Activated CD4-positive, alpha-beta T cell treated with anti-CD3 and anti-CD28 coated beads for 36 hours (primary cell): ENCODE measurements at regions of chr15 and their contacts with region 1.

Region 1: GRCh38 chr15:56732921-56733797 is at the start of gene ZNF280D:
- DNase-seq: peak; percentile 88
- ATAC-seq: peak; percentile 85
- H3K4me3 Mint-ChIP-seq: peak within 1 kb of the TSS; percentile 91
- H3K27ac Mint-ChIP-seq: peak within 1 kb of the TSS; percentile 98
- H3K4me1 Mint-ChIP-seq: peaks cover 32% of the 10 kb centered on the region
- H3K27me3 Mint-ChIP-seq: peaks cover 2% of the 10 kb centered on the region
- total RNA-seq, gene ZNF280D: 18.9 to 19.7 TPM

Region 2: DNA sequence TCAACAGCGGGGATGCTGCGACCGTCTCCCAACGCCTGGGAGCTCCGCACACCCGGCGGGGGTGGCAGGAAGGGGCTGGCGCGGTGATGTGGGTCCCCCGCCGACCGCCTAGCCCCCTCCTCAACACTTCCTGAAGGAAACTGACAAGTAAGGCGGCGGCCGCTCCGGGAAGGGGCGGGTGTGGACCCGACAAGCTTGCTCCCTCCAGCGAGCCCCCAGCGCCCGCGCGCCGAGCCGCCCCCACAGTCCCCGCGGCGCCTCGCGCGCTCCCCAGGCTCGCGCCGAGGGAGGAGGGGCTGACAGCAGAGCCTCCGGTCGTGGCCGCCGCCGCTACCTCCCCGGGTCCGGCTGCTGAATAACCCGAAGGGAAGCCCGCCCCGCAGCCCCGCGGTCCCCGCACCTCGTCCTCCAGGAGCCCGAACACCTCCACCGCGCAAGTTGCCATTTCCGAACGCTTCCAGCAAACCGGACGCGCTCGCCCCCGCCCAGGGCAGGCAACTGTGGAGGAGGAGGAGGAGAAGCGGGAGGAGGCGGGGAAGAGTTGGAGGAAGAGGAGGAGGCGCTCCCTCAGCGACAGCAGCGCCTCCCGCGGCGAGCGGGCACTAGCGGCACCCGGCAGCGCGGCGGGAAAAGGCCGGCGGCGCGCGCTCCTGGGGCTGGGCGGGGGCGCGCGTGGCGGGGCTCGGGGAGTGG is 739.9 kb before region 1 on chr15 and contains the start of gene NEDD4:
- CTCF ChIA-PET with region 1: no interaction called
- POLR2A ChIA-PET with region 1: no interaction called
- intact Hi-C with region 1: loop called in 1 of 2 experiments (anchors 10 kb)
- DNase-seq: peak; percentile 86
- ATAC-seq: peak; percentile 91
- H3K4me3 Mint-ChIP-seq: peak within 1 kb of the TSS; percentile 84
- H3K27ac Mint-ChIP-seq: peak within 1 kb of the TSS; percentile 79
- H3K4me1 Mint-ChIP-seq: peaks cover 22% of the 10 kb centered on the region
- H3K27me3 Mint-ChIP-seq: no peaks in the 10 kb centered on the region
- total RNA-seq, gene NEDD4: 22.4 to 23.3 TPM

Region 3: GRCh38 chr15:56464893-56465520 is 268.2 kb before region 1 on chr15 and contains the start of gene MNS1:
- CTCF ChIA-PET with region 1: interaction called, 4 read pairs
- POLR2A ChIA-PET with region 1: no interaction called
- intact Hi-C with region 1: loop called in 1 of 2 experiments (anchors 1 kb)
- DNase-seq: peak; percentile 90
- ATAC-seq: peak; percentile 97
- H3K4me3 Mint-ChIP-seq: peak within 1 kb of the TSS; percentile 84
- H3K27ac Mint-ChIP-seq: peak within 1 kb of the TSS; percentile 42
- H3K4me1 Mint-ChIP-seq: peaks cover 29% of the 10 kb centered on the region
- H3K27me3 Mint-ChIP-seq: peaks cover 19% of the 10 kb centered on the region
- total RNA-seq, gene MNS1: 0.41 to 0.74 TPM

Region 4: DNA sequence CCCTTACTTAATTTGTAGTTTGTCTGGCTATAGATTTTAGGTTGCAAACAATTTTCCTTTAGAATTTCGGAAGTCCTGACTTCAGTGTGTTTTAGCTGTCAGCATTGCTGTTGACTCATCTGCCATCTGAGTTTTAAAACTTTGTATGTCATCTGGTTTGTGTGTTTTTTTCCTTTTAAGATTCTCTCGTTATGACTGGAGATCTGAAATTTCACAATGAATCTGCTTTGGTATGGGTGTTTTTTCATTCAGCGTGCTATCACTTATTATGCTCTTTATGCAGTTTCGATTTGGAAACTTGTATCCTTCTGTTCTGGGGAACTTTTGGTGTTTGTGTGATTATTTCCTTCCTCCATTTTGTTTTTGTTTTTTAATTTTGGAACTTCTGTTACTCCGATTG is 53.8 kb after region 1 on chr15:
- CTCF ChIA-PET with region 1: no interaction called
- POLR2A ChIA-PET with region 1: no interaction called
- intact Hi-C with region 1: loop called in 1 of 2 experiments (anchors 5 kb)
- DNase-seq: no peak
- ATAC-seq: peak; percentile 96
- H3K4me3 Mint-ChIP-seq: no peak overlapping the region
- H3K27ac Mint-ChIP-seq: peak overlapping the region; percentile 29
- H3K4me1 Mint-ChIP-seq: peaks cover 14% of the 10 kb centered on the region
- H3K27me3 Mint-ChIP-seq: peaks cover 3% of the 10 kb centered on the region

Region 5: DNA sequence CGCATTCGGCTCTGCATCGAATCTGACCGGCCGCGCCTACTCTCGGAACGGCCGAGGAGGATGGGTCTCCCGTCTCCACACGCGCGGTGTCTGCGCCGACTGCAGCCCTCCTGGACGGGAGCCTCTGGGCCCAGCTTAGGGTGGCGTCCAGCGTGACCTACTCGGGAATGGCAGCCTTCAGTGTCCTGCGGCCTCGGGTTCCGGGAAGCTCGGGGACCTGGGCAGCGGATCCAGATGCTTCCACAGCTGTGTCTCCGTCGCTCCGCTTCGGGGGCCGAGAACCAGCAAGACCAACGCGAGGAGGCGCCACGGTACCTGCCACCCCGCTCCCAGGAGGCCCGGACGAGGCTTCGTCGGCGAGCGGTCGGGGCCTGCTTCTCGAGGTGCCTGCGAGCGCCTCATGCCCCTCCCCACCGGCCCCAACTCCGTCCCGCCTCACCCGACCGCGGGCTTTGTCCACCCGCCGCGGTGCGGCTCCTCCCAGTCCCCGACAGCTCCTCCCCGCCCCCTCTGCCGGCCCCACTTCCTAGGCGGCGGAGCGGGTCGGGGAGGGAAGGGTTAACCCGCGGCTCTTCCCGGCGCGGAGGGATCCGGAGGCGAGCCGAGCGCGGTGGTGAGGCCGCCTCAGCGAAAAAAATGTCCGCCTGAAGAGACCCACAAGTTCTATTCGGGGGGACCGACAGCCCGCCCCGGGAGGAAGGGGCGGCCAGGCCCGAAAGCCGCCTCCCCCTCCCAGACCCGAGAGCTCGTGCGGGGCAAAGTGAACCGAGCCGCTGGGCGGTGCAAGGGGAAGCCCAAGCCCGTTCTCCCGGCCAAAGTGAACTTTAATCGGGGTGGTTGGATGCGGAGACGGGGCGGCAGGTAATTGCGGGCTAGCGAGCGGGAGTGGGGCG is 185.1 kb after region 1 on chr15 and contains the start of gene TCF12:
- CTCF ChIA-PET with region 1: no interaction called
- POLR2A ChIA-PET with region 1: no interaction called
- intact Hi-C with region 1: loop called in 1 of 2 experiments (anchors 1 kb)
- DNase-seq: peak; percentile 95
- ATAC-seq: peak; percentile 85
- H3K4me3 Mint-ChIP-seq: peak within 1 kb of the TSS; percentile 82
- H3K27ac Mint-ChIP-seq: peak within 1 kb of the TSS; percentile 84
- H3K4me1 Mint-ChIP-seq: peaks cover 30% of the 10 kb centered on the region
- H3K27me3 Mint-ChIP-seq: no peaks in the 10 kb centered on the region
- total RNA-seq, gene TCF12: 61.1 to 74.9 TPM

Region 6: DNA sequence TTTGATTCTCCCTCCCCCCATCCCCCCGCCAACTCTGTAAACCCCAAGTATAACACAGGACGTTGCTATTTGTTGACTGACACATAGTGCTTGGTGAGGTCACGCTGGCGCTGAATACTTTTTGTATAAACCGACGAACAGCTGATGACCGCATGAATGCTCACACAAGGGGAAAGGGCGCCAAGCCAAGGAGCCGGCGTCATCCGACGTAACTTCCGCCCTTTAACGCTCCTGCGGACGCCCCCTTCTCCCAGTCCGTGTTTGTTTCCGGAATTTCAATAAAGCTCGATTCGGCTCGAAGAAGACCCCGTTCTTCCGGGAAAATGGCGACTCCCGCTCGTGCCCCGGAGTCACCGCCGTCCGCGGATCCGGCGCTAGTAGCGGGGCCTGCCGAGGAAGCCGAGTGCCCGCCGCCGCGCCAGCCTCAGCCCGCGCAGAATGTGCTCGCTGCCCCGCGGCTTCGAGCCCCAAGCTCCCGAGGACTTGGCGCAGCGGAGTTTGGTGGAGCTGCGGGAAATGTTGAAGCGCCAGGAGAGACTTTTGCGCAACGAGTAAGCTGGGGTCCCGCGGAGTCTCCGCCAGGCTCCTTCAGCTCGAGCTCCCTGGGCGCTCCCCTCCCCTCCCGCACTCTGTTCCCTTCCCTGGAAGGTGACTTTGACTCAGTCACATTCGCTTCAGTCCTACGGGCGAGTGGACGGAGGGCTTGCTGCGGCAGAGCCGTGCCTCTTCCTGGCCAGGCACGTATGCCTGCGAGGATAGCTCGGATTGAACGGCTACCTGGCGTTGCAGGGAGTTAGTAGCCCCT is 973.4 kb after region 1 on chr15 and contains the start of gene POLR2M:
- CTCF ChIA-PET with region 1: no interaction called
- POLR2A ChIA-PET with region 1: no interaction called
- intact Hi-C with region 1: loop called in 1 of 2 experiments (anchors 5 kb)
- DNase-seq: peak; percentile 96
- ATAC-seq: peak; percentile 94
- H3K4me3 Mint-ChIP-seq: peak within 1 kb of the TSS; percentile 90
- H3K27ac Mint-ChIP-seq: peak within 1 kb of the TSS; percentile 95
- H3K4me1 Mint-ChIP-seq: peaks cover 70% of the 10 kb centered on the region
- H3K27me3 Mint-ChIP-seq: no peaks in the 10 kb centered on the region
- total RNA-seq, gene POLR2M: 76.1 to 87.2 TPM